ENCODE measurements at regions of chr1 and their contacts with region 1.

Region 1: GRCh38 chr1:58197811-58198210 is 348.7 kb downstream of the OMA1 start:
- H3K4me3 ChIP-seq: no peak overlapping the region
- H3K27ac ChIP-seq: no peak overlapping the region
- H3K4me1 ChIP-seq: no peaks in the 10 kb centered on the region
- CTCF ChIP-seq: no peak

Region 2: GRCh38 chr1:58075188-58075578 is 122.6 kb before region 1 on chr1:
- CTCF ChIA-PET with region 1: no interaction called
- POLR2A ChIA-PET with region 1: no interaction called
- H3K4me3 ChIP-seq: no peak overlapping the region
- H3K27ac ChIP-seq: no peak overlapping the region
- H3K4me1 ChIP-seq: no peaks in the 10 kb centered on the region
- CTCF ChIP-seq: no peak

Region 3: GRCh38 chr1:58162952-58163550 is 34.8 kb before region 1 on chr1:
- CTCF ChIA-PET with region 1: interaction called, 16 read pairs
- POLR2A ChIA-PET with region 1: no interaction called
- H3K4me3 ChIP-seq: no peak overlapping the region
- H3K27ac ChIP-seq: no peak overlapping the region
- H3K4me1 ChIP-seq: no peaks in the 10 kb centered on the region
- CTCF ChIP-seq: 0 out of 2 replicates have a peak, but pooled peaks have one; percentile 47

Region 4: DNA sequence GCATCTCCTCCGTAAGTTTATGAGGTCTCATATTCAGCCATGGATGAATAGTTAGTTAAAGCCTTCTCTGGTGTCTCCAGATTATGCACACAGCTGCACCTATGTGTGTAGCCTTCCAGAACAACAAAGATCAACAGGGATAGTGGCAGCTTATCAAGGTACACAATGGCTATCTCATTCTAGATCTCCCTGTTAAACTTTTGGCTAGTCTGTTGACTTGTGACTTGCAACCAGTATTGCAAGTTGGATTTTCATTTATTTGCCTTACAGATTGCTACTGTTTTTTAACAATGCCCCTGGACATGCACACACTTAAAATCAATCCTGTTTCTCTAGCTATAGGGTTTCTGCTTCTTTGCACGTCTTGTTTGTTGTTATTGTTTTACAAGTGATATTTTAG is 14.5 kb before region 1 on chr1:
- CTCF ChIA-PET with region 1: no interaction called
- POLR2A ChIA-PET with region 1: no interaction called
- H3K4me3 ChIP-seq: no peak overlapping the region
- H3K27ac ChIP-seq: no peak overlapping the region
- H3K4me1 ChIP-seq: no peaks in the 10 kb centered on the region
- CTCF ChIP-seq: no peak

Measured in HEK293 (cell line).